OCI-LY7 (cell line): ENCODE measurements at regions of chr22 and their contacts with region 1.

Region 1: DNA sequence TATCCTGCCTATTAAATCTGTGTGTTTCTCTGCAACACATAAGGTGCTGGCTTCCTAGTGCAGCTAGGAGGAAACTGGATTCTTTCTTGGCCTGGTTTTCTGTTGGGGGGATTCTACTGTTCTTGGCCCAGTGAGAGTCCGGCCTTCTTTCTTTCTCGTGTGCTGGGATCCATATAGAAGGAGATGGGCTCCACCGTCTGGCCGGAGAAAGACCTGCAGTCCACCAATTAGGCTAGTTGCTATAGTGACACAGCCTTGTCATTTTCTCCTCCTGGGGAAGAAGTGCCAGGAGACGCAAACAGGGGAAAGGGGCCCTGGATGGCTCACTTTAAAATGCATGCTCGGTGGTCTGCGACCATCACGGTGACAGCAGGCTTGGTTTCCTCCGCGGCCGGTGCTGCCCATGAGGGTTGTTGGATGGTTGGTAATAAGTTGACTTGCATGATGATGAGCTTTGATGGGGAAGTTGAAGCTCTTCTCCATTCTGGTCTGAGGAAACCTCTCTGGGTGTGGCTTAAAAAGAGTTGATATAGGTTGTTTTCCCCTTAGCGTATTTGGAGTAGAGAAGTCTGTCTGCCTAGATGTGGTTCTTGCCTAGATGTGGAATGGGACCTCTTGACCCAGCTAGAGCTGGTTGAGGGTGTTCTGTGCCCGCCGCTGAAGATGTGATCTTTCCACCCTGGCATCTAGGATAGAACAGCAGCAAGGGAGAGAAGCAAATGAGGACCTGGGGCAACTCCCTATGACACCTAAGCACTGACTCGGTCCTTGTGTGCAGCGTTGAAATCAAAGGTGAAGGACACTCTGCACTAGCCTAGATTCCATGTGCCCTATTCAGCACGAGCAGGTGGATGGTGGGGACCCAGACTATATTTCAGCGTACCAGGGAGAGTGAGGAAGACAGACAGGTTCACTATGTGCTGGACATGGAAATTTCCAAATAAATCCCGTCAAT is 1335.0 kb downstream of the BRD1 start:
- DNase-seq: peak; percentile 74
- H3K4me3 ChIP-seq: no peak overlapping the region
- H3K27ac ChIP-seq: no peak overlapping the region
- H3K4me1 ChIP-seq: peaks cover 8% of the 10 kb centered on the region
- CTCF ChIP-seq: peak; percentile 97

Region 2: GRCh38 chr22:47213571-47214230 is 1278.9 kb before region 1 on chr22:
- CTCF ChIA-PET with region 1: no interaction called
- POLR2A ChIA-PET with region 1: no interaction called
- intact Hi-C with region 1: loop called (anchors 5 kb)
- DNase-seq: peak; percentile 46
- H3K4me3 ChIP-seq: no peak overlapping the region
- H3K27ac ChIP-seq: no peak overlapping the region
- H3K4me1 ChIP-seq: no peaks in the 10 kb centered on the region
- CTCF ChIP-seq: peak; percentile 87

Region 3: DNA sequence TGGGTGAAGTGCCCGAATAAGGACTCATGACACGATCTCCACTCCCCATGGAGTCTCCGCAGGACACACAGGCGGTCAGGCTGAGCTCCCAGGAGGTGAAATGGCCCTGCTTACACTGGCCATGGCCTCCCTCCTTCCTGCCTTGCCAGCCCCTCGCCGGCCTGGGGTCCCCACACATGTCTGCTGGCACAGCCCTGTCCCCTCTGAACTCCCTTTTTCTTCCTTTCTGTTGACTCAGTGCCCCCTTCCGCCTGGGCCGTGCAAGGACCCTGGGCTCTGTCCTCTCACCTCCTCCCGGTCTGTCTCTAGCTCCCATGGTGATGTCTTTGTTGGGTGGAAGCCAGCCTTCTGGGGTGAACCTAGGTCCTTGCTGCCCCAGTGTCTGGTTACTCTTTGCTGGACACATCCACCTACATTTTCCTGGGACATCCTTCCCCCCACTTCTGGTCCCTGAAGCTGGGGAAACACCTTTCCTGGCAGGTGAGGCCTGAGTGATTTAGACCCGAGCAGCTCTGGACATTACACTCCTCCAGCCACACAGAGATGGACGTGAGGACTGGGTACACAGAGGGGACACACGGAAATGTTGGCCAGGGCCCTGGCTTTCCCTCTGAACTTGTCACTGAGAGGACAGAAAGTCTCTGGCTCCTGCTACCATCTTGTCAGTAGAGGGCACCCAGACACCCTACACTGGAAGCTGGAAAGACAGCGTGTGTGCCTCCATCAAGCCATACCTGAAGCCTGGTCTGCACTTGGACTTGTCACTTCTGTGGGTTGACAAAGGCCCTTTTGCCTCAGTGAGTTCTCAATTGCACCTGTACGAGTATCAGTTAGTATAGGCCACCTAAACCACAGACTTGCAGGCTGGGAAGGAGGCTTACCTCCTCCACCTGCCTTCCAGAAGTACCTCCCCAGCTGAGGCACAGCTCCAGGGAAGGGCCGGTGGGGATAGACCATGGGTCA is 865.9 kb before region 1 on chr22:
- CTCF ChIA-PET with region 1: no interaction called
- POLR2A ChIA-PET with region 1: no interaction called
- intact Hi-C with region 1: loop called (anchors 1 kb)
- DNase-seq: peak; percentile 34
- H3K4me3 ChIP-seq: no peak overlapping the region
- H3K27ac ChIP-seq: no peak overlapping the region
- H3K4me1 ChIP-seq: no peaks in the 10 kb centered on the region
- CTCF ChIP-seq: peak; percentile 63

Region 4: DNA sequence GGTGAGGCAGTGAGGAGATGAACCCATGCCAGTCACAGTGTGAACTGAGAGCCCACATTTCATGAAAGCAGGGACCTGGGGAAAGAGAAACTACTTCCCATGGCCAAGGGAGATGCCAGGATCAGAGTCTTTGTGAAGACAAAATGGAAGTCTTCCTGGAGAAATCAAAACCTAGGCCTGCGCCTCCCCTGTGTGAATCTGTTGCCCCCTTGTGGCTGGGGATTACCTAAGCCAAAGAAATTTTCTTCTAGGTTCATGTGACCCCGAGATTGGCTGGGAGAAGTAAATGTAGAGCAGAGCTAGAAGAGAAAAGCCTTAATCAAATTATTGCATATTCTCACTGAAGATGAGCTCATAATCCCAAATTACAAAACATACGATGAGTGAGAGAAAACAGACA is 654.9 kb before region 1 on chr22:
- CTCF ChIA-PET with region 1: no interaction called
- POLR2A ChIA-PET with region 1: no interaction called
- intact Hi-C with region 1: loop called (anchors 5 kb)
- DNase-seq: peak; percentile 65
- H3K4me3 ChIP-seq: no peak overlapping the region
- H3K27ac ChIP-seq: no peak overlapping the region
- H3K4me1 ChIP-seq: peaks cover 28% of the 10 kb centered on the region
- CTCF ChIP-seq: peak; percentile 86

Region 5: DNA sequence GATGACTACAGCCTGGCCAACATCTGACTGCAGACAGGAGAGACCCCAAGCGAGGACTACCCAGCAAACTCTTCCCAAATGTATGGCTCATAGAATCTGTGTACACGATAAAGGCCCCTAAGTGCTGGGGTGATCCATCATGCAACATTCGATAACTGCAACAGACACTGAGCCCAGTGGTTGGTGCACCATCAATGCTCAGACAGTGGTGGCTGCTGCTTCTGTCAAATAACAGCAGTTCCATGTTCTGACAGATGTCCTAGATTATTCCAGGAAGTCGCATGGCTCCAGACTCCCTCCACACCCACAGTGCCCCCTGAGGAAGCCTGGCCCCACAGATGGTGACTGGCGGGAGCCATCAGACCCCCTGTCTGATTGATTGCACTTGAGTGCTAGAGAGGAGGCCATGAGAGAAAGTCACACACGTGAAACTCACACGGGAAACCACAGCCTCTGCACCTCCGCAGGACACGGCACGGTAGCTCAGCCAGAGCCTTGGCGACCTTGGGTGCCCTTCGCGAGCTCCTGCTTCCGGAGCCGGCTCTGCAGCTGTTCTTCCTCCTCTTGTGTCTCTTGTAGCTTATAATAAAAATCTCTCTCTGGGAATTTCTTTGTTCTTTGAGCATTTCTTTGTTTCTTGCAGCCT is 574.2 kb before region 1 on chr22:
- CTCF ChIA-PET with region 1: no interaction called
- POLR2A ChIA-PET with region 1: no interaction called
- intact Hi-C with region 1: loop called (anchors 10 kb)
- DNase-seq: peak; percentile 94
- H3K4me3 ChIP-seq: peak overlapping the region; percentile 55
- H3K27ac ChIP-seq: peak overlapping the region; percentile 97
- H3K4me1 ChIP-seq: peaks cover 68% of the 10 kb centered on the region
- CTCF ChIP-seq: peak; percentile 27; the same call in 1 of the 2 replicates

Region 6: DNA sequence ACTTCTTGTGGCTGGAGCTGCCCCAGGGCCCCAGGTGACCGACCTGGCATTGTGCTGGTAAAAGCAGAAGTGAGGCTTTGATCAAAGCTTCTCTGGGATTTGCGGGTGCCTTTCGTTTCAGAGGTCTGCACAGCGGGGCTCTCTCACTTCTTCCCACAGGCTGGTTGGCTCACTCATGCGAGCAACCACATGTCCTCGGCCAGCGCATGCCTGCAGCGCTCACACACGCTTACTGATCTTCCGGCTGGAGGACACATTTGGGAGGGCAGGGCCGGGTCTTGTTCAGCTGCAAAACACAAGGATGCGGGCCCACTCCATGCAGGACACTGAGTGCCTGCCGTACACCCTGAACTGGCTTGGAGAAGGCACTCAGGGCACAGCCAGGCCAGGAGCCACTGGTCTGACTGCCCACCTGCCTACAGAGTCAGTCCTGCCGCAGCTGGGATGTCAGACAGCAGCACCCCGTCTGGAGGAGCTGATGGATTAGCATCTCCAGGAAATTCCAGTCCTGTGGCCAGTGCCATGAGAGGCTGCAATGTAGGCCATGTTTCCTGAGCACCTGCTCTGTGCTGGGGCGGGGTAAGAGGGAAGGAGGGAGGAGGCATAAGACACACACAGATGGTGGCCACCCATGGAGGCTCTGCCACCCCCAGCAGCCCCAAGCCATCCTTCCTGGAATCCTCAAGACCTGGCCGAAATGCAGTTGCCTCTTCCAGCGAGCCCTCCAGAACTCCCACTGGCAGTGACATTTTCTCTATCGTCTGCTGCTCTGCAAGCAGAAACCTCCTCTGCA is 48.1 kb before region 1 on chr22:
- CTCF ChIA-PET with region 1: no interaction called
- POLR2A ChIA-PET with region 1: no interaction called
- intact Hi-C with region 1: loop called (anchors 2 kb)
- DNase-seq: peak; percentile 92
- H3K4me3 ChIP-seq: peak overlapping the region; percentile 38
- H3K27ac ChIP-seq: peak overlapping the region; percentile 55
- H3K4me1 ChIP-seq: peaks cover 34% of the 10 kb centered on the region
- CTCF ChIP-seq: no peak

Region 7: GRCh38 chr22:48644108-48644507 is 151.5 kb after region 1 on chr22:
- CTCF ChIA-PET with region 1: no interaction called
- POLR2A ChIA-PET with region 1: no interaction called
- intact Hi-C with region 1: no loop called
- DNase-seq: no peak
- H3K4me3 ChIP-seq: no peak overlapping the region
- H3K27ac ChIP-seq: no peak overlapping the region
- H3K4me1 ChIP-seq: no peaks in the 10 kb centered on the region
- CTCF ChIP-seq: no peak